PC-9 (cell line): ENCODE measurements at regions of chr3 and their contacts with region 1.

Region 1: GRCh38 chr3:195748661-195749060 is 27.9 kb downstream of the MUC20 start:
- DNase-seq: no peak
- H3K4me3 ChIP-seq: no peak overlapping the region
- H3K27ac ChIP-seq: no peak overlapping the region
- H3K4me1 ChIP-seq: peaks cover 20% of the 10 kb centered on the region
- H3K27me3 ChIP-seq: no peaks in the 10 kb centered on the region
- CTCF ChIP-seq: no peak

Region 2: DNA sequence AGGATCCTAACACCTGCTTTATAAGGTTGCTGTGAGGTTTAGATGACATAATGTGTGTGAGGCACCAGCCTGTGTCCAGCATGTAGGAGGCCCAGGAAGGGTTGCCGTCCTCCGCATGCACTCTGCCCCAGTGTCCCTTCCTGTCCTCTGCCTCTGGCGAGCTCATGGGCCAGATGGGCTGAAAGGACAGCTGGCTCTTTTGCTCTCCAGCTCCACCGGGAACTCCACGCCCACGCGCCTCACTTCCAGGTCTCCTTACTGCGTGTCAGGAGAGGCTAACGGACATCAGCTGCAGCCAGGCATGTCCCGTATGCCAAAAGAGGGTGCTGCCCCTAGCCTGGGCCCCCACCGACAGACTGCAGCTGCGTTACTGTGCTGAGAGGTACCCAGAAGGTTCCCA is 15.7 kb before region 1 on chr3:
- CTCF ChIA-PET with region 1: no interaction called
- POLR2A ChIA-PET with region 1: no interaction called
- intact Hi-C with region 1: loop called (anchors 1 kb)
- DNase-seq: no peak
- H3K4me3 ChIP-seq: no peak overlapping the region
- H3K27ac ChIP-seq: no peak overlapping the region
- H3K4me1 ChIP-seq: no peaks in the 10 kb centered on the region
- H3K27me3 ChIP-seq: no peaks in the 10 kb centered on the region
- CTCF ChIP-seq: no peak